Sciatic nerve (tissue), 2 donors: ENCODE measurements at regions of chr1 and their contacts with region 1.

Region 1: DNA sequence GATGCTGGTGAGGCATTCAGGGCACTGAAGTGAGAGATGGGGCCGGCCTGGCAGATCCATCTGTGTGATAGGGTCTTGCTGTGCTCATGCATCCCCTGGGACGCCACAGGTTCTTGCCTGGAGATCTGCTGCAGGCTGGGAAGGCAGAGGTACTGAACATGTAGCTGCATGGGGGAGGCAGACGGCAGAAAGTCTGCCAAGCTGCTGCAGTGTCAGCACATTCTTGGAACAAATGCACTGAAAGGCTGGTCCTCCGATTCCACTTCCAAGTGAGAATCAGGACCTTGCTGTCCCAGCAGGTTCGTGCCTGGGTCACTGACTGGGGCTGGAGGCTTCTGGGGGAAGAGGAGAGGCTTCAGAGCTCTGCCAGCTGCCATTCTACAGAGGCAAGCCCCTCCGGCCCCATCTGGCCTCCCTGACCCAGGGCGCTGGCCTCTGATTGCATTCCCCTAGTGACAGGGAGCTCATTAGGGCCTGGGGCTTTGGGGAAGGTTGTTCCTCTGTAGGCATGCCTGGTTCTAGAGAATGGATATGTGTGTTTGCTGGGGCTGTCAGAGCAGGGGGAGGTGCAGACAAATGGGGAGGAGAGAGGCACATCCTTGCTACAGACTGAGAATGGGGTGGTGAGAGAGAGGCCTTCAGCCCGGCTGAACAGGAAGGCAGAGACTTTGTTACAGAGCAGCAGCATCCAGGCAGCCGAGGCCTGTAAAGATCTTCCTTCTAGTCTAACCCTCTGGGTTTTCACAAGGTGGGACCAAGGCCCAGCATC is 174.0 kb downstream of the TRABD2B start:
- DNase-seq: no peak
- ATAC-seq: no peak

Region 2: GRCh38 chr1:48943393-48943792 is 1120.2 kb after region 1 on chr1:
- intact Hi-C with region 1: loop called (anchors 5 kb)
- DNase-seq: no peak
- ATAC-seq: no peak